Prostate gland (tissue), 2 donors: ENCODE measurements at regions of chr4 and their contacts with region 1.

Region 1: DNA sequence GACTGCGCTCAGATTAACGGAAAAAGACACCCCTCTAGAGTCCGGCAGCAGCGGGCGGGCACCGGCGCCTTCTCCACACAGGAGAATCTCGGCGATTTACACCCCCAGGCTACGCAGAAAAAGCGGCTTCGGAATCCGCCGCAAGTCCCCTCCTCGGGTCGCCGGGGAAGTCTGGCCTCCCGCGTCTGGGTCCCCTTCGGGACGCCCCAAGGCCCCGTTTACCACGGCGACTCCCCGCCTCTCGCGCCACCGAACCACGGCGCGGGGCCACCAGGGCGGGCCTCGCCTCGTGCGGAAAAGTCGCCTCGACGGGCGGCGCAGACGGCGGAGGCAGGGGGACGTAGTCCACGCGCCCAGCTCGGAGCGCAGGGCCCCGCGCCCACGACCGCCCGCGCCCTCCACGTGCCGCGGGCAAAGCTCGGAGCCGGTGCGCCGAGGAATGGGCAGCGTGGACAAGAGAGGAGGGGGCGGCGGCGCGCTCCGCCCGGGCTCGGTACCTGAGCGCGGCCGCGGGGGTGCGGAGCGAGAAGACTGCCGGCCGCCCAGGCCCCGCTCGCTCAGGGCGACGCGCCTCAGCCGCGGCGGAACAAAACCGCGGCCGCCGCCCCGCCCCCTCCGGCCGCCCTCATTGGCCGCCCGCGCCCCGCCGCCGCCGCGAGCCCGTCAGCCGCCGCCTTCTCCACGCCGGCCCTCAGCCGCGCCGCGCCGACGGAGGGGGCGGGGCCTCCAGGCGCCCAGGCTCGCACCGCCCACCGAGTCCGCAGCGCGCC is at the start of gene FAM53A:
- DNase-seq: peak; percentile 89
- H3K4me3 ChIP-seq: peak within 1 kb of the TSS; percentile 53 to 59
- H3K27ac ChIP-seq: peak within 1 kb of the TSS; percentile 61 to 71
- H3K4me1 ChIP-seq: no peaks in the 10 kb centered on the region
- H3K27me3 ChIP-seq: no peaks in the 10 kb centered on the region
- CTCF ChIP-seq: peak in 1 of 4 experiments; percentile 33
- POLR2A ChIP-seq: no peak
- total RNA-seq, gene FAM53A: 2.3 to 16.8 TPM

Region 2: DNA sequence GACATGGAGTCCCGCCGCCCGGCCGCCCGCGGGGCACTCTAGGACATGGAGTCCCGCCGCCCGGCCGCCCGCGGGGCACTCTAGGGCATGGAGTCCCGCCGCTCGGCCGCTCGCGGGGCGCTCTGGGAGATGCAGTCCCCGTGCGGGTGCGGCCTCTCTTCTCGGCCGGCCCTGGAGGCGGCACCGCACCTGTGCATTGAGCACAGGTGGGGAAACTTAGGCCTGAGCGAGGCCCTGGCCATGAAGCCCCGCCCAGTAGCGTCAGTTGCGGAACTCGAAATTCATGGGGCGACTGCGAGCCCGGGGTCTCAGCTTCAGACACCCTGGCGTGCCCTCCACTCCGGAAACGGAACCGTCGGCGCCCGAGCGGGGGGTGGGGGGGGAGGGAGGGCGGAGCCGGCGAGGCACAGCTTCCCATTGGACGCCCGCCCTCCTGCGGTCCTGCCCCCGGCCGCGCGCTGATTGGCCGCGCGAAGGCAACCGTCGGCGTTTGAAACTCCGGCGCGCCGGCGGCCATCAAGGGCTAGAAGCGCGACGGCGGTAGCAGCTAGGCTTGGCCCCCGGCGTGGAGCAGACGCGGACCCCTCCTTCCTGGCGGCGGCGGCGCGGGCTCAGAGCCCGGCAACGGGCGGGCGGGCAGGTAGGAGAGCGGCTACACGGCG is 37.2 kb after region 1 on chr4 and contains the starts of genes TACC3 and TMEM129:
- intact Hi-C with region 1: loop called (anchors 5 kb)
- DNase-seq: peak; percentile 98
- H3K4me3 ChIP-seq: peak within 1 kb of the TSS; percentile 63 to 67
- H3K27ac ChIP-seq: peak within 1 kb of the TSS; percentile 85 to 89
- H3K4me1 ChIP-seq: peaks cover 23% of the 10 kb centered on the region
- H3K27me3 ChIP-seq: no peaks in the 10 kb centered on the region
- CTCF ChIP-seq: peak in 1 of 4 experiments; percentile 12
- POLR2A ChIP-seq: peak; percentile 89
- total RNA-seq, gene TACC3: 4.3 to 35.6 TPM
- total RNA-seq, gene TMEM129: 73.7 to 81.7 TPM